CD8-positive, alpha-beta T cell (primary cell): ENCODE measurements at regions of chr7 and their contacts with region 1.

Region 1: GRCh38 chr7:28926871-28927597 is 31.1 kb downstream of the TRIL start:
- DNase-seq: peak; percentile 2 to 83 (median 44)
- ATAC-seq: peak; percentile 92
- H3K4me3 ChIP-seq: peak overlapping the region; percentile 42 to 55
- H3K4me3 Mint-ChIP-seq: peak overlapping the region; percentile 92
- H3K27ac ChIP-seq: no peak overlapping the region
- H3K27ac Mint-ChIP-seq: no peak overlapping the region
- H3K4me1 ChIP-seq: peaks cover 13% of the 10 kb centered on the region
- H3K4me1 Mint-ChIP-seq: peaks cover 20% of the 10 kb centered on the region
- H3K27me3 ChIP-seq: no peaks in the 10 kb centered on the region
- H3K27me3 Mint-ChIP-seq: peaks cover 11% of the 10 kb centered on the region
- CTCF ChIP-seq: peak; percentile 72

Region 2: DNA sequence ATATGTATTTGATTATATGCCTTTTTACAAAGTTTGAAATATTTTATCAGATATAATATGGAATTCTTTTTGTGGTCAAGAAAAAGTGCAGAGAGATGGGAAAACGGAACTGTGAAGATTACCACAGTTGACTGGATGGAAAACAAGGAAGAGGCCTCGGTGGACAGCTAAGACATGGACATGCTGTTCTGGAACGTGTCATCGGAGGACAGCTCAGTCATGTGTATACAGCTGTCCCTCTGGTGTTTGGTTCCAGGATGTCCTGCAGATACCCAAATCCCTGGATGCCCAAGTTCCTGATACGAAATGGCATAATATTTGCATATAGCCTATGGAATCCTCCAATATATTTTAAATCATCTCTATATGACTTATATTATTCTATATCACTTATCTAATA is 18.3 kb before region 1 on chr7:
- CTCF ChIA-PET with region 1: interaction called, 26 read pairs
- POLR2A ChIA-PET with region 1: no interaction called
- intact Hi-C with region 1: no loop called
- DNase-seq: no peak
- ATAC-seq: no peak
- H3K4me3 ChIP-seq: no peak overlapping the region
- H3K4me3 Mint-ChIP-seq: no peak overlapping the region
- H3K27ac ChIP-seq: no peak overlapping the region
- H3K27ac Mint-ChIP-seq: no peak overlapping the region
- H3K4me1 ChIP-seq: no peaks in the 10 kb centered on the region
- H3K4me1 Mint-ChIP-seq: no peaks in the 10 kb centered on the region
- H3K27me3 ChIP-seq: no peaks in the 10 kb centered on the region
- H3K27me3 Mint-ChIP-seq: peaks cover 16% of the 10 kb centered on the region
- CTCF ChIP-seq: no peak

Region 3: DNA sequence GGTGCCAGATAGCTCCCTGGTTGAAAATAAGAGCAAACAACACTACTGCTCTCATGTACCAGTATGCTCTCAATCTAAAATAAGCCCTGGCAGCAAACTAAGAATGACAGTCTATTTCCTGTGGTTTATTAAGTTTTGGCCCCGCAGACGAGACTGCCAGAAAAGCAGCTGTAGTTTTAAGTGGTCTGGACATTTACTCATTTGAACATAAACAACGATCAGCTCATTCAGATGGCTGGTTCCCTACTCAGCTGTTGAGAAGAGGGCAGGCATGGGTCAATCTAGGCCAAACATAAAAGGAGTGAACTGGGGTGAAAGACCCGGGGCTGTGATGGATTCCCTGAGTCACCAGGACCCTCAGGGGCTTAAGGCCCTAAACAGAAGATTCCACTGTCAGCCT is 26.6 kb after region 1 on chr7:
- CTCF ChIA-PET with region 1: interaction called, 11 read pairs
- POLR2A ChIA-PET with region 1: no interaction called
- intact Hi-C with region 1: no loop called
- DNase-seq: no peak
- ATAC-seq: no peak
- H3K4me3 ChIP-seq: no peak overlapping the region
- H3K4me3 Mint-ChIP-seq: no peak overlapping the region
- H3K27ac ChIP-seq: no peak overlapping the region
- H3K27ac Mint-ChIP-seq: no peak overlapping the region
- H3K4me1 ChIP-seq: peaks cover 6% of the 10 kb centered on the region
- H3K4me1 Mint-ChIP-seq: peaks cover 9% of the 10 kb centered on the region
- H3K27me3 ChIP-seq: peaks cover 8 to 20% of the 10 kb centered on the region in 2 experiments
- H3K27me3 Mint-ChIP-seq: peaks cover 43% of the 10 kb centered on the region
- CTCF ChIP-seq: no peak

Region 4: GRCh38 chr7:29345600-29345999 is 418.6 kb after region 1 on chr7:
- CTCF ChIA-PET with region 1: interaction called, 4 read pairs
- POLR2A ChIA-PET with region 1: no interaction called
- intact Hi-C with region 1: loop called (anchors 2 to 10 kb)
- DNase-seq: peak in 6 of 9 experiments; percentile 15 to 55 (median 40)
- ATAC-seq: peak; percentile 48
- H3K4me3 ChIP-seq: no peak overlapping the region
- H3K4me3 Mint-ChIP-seq: no peak overlapping the region
- H3K27ac ChIP-seq: no peak overlapping the region
- H3K27ac Mint-ChIP-seq: no peak overlapping the region
- H3K4me1 ChIP-seq: peaks cover 11% of the 10 kb centered on the region
- H3K4me1 Mint-ChIP-seq: peaks cover 4% of the 10 kb centered on the region
- H3K27me3 ChIP-seq: no peaks in the 10 kb centered on the region
- H3K27me3 Mint-ChIP-seq: no peaks in the 10 kb centered on the region
- CTCF ChIP-seq: no peak

Region 5: DNA sequence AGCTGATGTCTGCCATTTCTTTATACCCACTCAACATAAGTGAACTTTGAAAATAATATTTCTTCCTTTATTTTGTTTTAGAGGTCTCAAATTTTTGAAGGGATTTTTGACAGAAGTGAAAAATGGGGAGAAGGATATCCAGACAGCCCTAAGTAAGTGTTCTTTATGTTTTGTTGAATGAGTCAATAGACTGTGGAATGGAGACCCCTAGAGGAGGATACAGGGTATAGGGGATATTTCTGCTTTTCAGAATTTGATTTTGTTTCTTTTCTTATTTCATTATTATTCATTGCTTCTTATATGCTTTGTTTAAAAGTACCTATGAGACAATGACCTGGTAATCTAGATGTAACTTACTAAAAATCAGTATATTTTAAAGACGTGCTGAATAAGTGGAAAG is 1135.6 kb after region 1 on chr7:
- CTCF ChIA-PET with region 1: no interaction called
- POLR2A ChIA-PET with region 1: no interaction called
- intact Hi-C with region 1: loop called in 1 of 2 experiments (anchors 10 kb)
- DNase-seq: peak in 2 of 9 experiments; percentile 33 to 51
- ATAC-seq: peak; percentile 49
- H3K4me3 ChIP-seq: no peak overlapping the region
- H3K4me3 Mint-ChIP-seq: no peak overlapping the region
- H3K27ac ChIP-seq: no peak overlapping the region
- H3K27ac Mint-ChIP-seq: no peak overlapping the region
- H3K4me1 ChIP-seq: no peaks in the 10 kb centered on the region
- H3K4me1 Mint-ChIP-seq: peaks cover 7% of the 10 kb centered on the region
- H3K27me3 ChIP-seq: no peaks in the 10 kb centered on the region
- H3K27me3 Mint-ChIP-seq: no peaks in the 10 kb centered on the region
- CTCF ChIP-seq: peak; percentile 60